Aorta (tissue), 5 donors: ENCODE measurements at regions of chr11 and their contacts with region 1.

Region 1: DNA sequence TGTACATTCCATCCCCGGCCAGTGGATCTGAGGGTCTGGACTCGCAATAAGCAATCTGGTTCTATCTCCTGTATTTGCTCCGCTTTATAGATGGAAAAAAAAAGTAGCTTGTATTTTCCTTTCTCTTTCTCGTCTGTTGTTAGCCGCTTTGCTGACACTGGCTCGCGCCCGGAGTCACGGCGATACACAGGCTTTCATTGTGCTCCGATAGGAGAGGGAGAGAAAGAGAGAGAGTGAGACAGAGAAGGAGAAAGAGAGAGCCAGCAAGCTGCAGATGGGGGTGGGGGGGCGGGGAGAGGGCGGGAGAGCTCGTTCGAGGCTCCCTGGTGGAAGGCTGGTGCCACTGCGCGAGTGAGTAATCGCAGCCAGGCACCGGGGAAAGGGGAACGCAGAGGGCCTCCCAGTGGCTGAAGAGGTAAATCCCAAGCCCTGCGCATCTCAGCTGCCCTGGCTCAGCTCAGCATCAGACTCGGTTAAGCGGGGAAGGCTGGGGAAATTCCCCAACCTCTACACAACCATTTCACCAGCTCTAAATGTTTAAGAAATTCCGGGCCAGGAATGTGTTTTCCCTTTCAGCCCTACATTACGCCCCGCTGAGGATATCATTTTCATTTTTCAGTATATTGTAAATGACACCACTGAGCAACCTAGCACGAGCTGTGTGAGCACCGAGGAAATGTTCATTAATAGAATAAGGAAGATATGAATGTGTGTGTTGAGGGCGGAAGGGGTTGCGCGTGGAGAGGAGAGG is at the start of gene MAML2:
- DNase-seq: peak; percentile 96
- ATAC-seq: peak; percentile 93
- H3K4me3 ChIP-seq: peak within 1 kb of the TSS; percentile 87 to 100
- H3K27ac ChIP-seq: peak within 1 kb of the TSS in 1 of 2 donors; percentile 89
- H3K4me1 ChIP-seq: peaks cover 0 to 12% of the 10 kb centered on the region in 2 donors
- H3K27me3 ChIP-seq: no peaks in the 10 kb centered on the region
- total RNA-seq, gene MAML2: 18.1 to 27.5 TPM

Region 2: DNA sequence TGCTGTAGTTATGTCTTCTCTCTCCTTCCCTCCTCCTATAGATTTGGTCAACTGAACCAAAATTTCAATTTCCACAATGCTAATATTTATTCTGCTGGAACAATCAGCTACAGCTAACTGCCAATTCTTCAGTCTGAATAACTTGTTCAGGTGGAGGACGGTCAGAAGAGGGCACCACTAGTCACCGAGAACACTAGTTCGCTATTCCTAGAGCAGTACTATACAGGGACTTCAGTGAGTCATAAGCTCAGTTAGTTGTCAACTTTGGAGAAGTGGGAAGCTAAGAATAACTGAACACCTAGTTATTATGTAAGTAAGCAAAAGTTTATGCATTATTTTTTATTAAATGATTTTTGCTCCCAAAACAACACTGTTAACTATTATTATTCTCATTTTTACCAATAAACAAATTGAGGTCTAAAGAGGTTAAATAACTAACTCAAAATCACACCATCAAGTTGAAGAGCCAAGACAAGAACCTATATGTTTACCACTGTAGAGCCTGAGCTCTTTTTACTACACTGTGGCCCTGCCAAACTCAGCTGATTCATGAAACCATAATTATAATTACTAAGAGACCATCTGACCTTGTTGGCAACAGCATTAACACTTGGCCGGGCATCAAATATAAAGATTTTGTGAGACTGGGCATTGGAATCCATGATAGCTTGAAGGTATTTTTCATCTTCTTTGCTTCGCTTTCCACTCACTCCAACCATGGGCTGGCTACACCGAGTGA is 493.9 kb before region 1 on chr11:
- intact Hi-C with region 1: loop called (anchors 2 to 5 kb)
- DNase-seq: peak in 1 of 2 donors; percentile 59
- ATAC-seq: peak; percentile 86
- H3K4me3 ChIP-seq: no peak overlapping the region
- H3K27ac ChIP-seq: no peak overlapping the region
- H3K4me1 ChIP-seq: no peaks in the 10 kb centered on the region
- H3K27me3 ChIP-seq: no peaks in the 10 kb centered on the region

Region 3: DNA sequence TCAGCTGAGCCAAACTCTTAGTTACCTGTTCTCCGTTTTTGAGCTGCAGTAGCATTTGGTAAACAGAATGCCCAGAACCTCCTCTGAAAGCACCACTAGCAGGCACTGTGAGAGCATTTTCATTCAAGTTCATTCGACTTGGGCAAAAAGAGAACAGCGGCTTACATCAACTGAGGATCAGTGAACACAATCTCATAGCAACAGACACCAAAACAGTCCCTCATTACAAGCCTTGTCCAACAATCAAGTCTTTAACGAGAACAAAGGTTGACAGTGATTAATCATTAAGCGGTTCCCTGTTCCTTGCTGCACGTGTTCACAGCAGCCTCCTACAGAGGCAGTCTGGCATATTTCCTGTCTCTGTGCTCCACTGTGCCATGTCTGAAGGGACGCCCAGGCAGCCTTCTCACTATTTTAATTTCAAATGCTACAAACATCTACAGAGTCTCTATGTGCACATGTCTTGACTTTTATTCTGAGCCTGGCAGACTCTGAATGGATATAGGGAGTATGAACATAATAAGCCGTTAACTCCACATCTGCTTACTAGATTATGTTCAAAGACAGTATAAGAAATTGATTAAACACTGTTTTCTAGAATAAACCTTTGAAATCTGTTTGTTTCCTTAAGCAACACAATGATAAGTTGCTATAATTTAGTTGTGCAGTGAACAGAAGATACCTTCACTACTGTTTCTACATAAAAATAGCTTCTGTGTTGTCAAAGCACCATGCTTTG is 330.9 kb before region 1 on chr11:
- intact Hi-C with region 1: loop called (anchors 2 to 10 kb)
- DNase-seq: peak in 1 of 2 donors; percentile 64
- ATAC-seq: peak; percentile 82
- H3K4me3 ChIP-seq: no peak overlapping the region
- H3K27ac ChIP-seq: peak overlapping the region in 1 of 2 donors; percentile 50
- H3K4me1 ChIP-seq: no peaks in the 10 kb centered on the region
- H3K27me3 ChIP-seq: no peaks in the 10 kb centered on the region

Region 4: GRCh38 chr11:96054870-96055705 is 288.0 kb before region 1 on chr11:
- intact Hi-C with region 1: loop called in 1 of 2 experiments (anchors 5 kb)
- DNase-seq: no peak
- ATAC-seq: peak; percentile 61
- H3K4me3 ChIP-seq: no peak overlapping the region
- H3K27ac ChIP-seq: peak overlapping the region in 1 of 2 donors; percentile 63
- H3K4me1 ChIP-seq: peaks cover 6 to 9% of the 10 kb centered on the region in 2 donors
- H3K27me3 ChIP-seq: no peaks in the 10 kb centered on the region

Region 5: GRCh38 chr11:96242971-96243647 is 100.0 kb before region 1 on chr11:
- intact Hi-C with region 1: loop called (anchors 5 to 10 kb)
- DNase-seq: peak; percentile 97 to 98
- ATAC-seq: peak; percentile 97
- H3K4me3 ChIP-seq: peak overlapping the region in 1 of 2 donors; percentile 39
- H3K27ac ChIP-seq: peak overlapping the region in 1 of 2 donors; percentile 85
- H3K4me1 ChIP-seq: peaks cover 4 to 9% of the 10 kb centered on the region in 2 donors
- H3K27me3 ChIP-seq: no peaks in the 10 kb centered on the region